Activated CD4-positive, alpha-beta memory T cell treated with anti-CD3 and anti-CD28 coated beads, Interleukin-2, amount 10 ng/mL, durations not matched to agents 7 days and 5 days (primary cell): ENCODE measurements at regions of chr19 and their contacts with region 1.

Region 1: GRCh38 chr19:18281082-18282020 is at the start of gene JUND:
- DNase-seq: peak; percentile 99
- H3K4me3 Mint-ChIP-seq: peak within 1 kb of the TSS; percentile 98
- H3K27ac Mint-ChIP-seq: peak within 1 kb of the TSS; percentile 95
- H3K4me1 Mint-ChIP-seq: peaks cover 50% of the 10 kb centered on the region
- H3K27me3 Mint-ChIP-seq: no peaks in the 10 kb centered on the region
- total RNA-seq, gene JUND: 390 to 402 TPM

Region 2: DNA sequence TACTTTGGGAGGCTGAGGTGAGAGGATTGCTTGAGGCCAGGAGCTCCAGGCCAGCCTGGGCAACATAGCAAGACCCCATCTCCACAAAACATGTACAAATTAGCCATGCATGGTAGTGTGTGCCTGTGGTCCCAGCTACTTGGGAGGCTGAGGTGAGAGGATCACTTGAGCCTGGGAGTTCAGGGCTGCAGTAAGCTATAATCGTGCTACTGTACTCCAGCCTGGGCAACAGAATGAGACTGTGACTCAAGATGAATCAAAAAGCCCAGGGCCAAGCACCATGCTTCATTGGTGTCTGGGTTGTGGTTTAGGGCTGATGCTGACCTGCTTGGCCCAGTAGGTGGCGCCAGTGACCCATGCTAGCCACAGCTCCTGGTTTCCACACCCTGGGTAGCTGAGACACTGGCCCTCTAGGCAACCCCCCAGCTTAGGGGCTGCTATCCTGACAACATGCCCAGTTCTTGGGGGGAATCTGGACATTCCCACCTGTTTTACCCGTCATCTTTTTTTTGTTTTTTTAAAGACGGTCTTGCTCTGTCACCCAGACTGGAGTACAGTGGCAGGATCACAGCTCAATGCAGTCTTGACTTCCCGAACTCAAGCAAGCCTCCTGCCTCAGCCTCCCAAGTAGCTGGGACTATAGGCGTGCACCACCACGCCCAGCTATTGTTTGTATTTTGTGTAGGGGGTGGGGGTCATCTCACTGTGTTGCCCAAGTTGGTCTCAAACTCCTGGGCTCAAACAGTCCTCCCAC is 343.1 kb before region 1 on chr19:
- CTCF ChIA-PET with region 1: no interaction called
- POLR2A ChIA-PET with region 1: no interaction called
- DNase-seq: peak; percentile 87
- H3K4me3 Mint-ChIP-seq: no peak overlapping the region
- H3K27ac Mint-ChIP-seq: no peak overlapping the region
- H3K4me1 Mint-ChIP-seq: peaks cover 8% of the 10 kb centered on the region
- H3K27me3 Mint-ChIP-seq: no peaks in the 10 kb centered on the region

Region 3: GRCh38 chr19:17951990-17952976 is 329.1 kb before region 1 on chr19:
- CTCF ChIA-PET with region 1: no interaction called
- POLR2A ChIA-PET with region 1: no interaction called
- DNase-seq: no peak
- H3K4me3 Mint-ChIP-seq: no peak overlapping the region
- H3K27ac Mint-ChIP-seq: no peak overlapping the region
- H3K4me1 Mint-ChIP-seq: peaks cover 29% of the 10 kb centered on the region
- H3K27me3 Mint-ChIP-seq: peaks cover 56% of the 10 kb centered on the region

Region 4: DNA sequence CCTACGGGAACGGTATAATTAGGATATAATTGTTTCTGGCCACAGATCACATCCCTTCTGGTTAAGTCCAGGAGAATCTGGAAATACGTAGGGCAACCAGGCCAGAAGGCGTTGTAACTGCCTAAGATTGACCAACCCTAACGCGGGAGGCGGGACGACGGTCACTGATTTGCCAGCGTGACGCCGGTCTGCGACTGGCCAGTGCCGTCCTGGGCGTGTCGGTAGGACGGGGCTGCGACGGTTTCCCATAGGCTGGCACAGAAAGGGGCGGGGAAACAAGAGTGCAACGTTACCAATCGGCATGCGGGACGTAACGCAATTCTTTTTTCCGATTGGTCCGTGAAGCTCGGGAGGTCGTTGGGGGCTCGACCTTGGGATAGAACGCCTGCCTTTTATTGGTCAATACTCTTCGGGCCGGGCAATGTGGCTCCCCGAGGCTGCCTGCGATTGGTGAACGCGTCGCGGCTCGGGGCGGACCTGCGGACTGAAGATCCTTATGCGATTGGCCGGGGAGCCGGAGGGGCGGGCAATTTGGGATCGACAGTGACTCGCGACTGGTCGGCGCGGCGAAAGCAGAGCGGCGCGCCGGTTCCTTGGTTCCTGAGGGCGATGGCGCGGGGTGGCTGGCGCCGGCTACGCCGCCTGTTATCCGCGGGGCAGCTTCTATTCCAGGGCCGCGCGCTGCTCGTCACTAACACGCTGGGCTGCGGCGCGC is 88.5 kb before region 1 on chr19 and contains the start of gene MPV17L2:
- CTCF ChIA-PET with region 1: interaction called, 14 read pairs
- POLR2A ChIA-PET with region 1: interaction called, 22 read pairs
- DNase-seq: peak; percentile 99
- H3K4me3 Mint-ChIP-seq: peak within 1 kb of the TSS; percentile 74
- H3K27ac Mint-ChIP-seq: peak within 1 kb of the TSS; percentile 85
- H3K4me1 Mint-ChIP-seq: peaks cover 23% of the 10 kb centered on the region
- H3K27me3 Mint-ChIP-seq: no peaks in the 10 kb centered on the region
- total RNA-seq, gene MPV17L2: 6.2 to 6.3 TPM

Region 5: GRCh38 chr19:18266771-18267686 is 14.3 kb before region 1 on chr19:
- CTCF ChIA-PET with region 1: interaction called, 24 read pairs
- POLR2A ChIA-PET with region 1: interaction called, 6 read pairs
- DNase-seq: no peak
- H3K4me3 Mint-ChIP-seq: no peak overlapping the region
- H3K27ac Mint-ChIP-seq: no peak overlapping the region
- H3K4me1 Mint-ChIP-seq: peaks cover 5% of the 10 kb centered on the region
- H3K27me3 Mint-ChIP-seq: no peaks in the 10 kb centered on the region

Region 6: DNA sequence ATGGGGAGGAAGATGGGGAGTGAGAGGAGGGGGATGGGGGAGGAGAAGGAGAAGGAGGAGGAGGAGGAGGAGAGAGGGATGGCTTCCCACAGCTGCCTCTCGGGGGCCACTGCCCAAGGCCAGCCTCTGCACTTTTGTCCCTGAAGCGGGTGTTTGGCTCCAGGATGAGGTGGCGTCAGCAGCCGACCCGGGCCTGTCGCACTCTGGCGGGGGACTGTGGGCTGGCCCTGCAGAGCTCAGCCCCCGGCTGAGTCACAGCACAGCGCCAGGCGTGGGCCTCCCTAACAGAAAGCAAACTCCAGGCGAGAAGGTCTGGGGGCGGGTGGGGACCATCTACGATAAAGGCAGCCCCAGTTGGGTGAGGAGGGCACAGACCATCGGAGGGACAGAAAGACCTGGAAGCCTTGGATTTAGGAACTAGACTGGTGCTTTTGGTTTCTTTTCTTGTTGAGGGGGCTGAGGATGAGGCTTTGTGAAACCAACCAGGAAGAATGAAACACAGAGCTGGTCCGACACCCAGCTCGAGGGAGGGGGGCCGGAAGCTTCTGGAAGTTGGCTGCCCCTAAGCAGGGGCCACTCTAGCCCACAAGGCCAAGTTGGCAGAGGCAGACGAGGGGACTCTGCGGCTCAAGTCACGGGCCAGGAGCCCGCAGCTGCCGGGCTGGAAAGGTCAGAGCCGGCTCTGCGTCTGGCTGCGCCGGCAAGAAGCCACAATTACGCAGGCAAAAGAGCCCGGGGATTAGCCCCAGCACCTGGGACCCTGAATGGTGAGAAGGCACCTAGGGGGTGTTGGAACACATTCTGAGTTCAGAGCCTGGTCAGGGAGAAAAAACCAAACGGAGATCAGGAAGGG is 23.3 kb after region 1 on chr19:
- CTCF ChIA-PET with region 1: interaction called, 393 read pairs
- POLR2A ChIA-PET with region 1: interaction called, 1,184 read pairs
- DNase-seq: peak; percentile 86
- H3K4me3 Mint-ChIP-seq: peak overlapping the region; percentile 93
- H3K27ac Mint-ChIP-seq: peak overlapping the region; percentile 94
- H3K4me1 Mint-ChIP-seq: peaks cover 53% of the 10 kb centered on the region
- H3K27me3 Mint-ChIP-seq: no peaks in the 10 kb centered on the region

Region 7: GRCh38 chr19:18340190-18340989 is 59.0 kb after region 1 on chr19 and contains the start of gene PGPEP1:
- CTCF ChIA-PET with region 1: interaction called, 19 read pairs
- POLR2A ChIA-PET with region 1: interaction called, 28 read pairs
- DNase-seq: peak; percentile 68
- H3K4me3 Mint-ChIP-seq: peak within 1 kb of the TSS; percentile 83
- H3K27ac Mint-ChIP-seq: peak within 1 kb of the TSS; percentile 84
- H3K4me1 Mint-ChIP-seq: peaks cover 23% of the 10 kb centered on the region
- H3K27me3 Mint-ChIP-seq: peaks cover 1% of the 10 kb centered on the region
- total RNA-seq, gene PGPEP1: 42.7 to 44.0 TPM